PC-9 (cell line): ENCODE measurements at regions of chr5 and their contacts with region 1.

Region 1: GRCh38 chr5:149809931-149810617 is 80.0 kb downstream of the PPARGC1B start:
- DNase-seq: no peak
- H3K4me3 ChIP-seq: no peak overlapping the region
- H3K27ac ChIP-seq: no peak overlapping the region
- H3K4me1 ChIP-seq: peaks cover 11% of the 10 kb centered on the region
- H3K27me3 ChIP-seq: no peaks in the 10 kb centered on the region
- CTCF ChIP-seq: no peak

Region 2: DNA sequence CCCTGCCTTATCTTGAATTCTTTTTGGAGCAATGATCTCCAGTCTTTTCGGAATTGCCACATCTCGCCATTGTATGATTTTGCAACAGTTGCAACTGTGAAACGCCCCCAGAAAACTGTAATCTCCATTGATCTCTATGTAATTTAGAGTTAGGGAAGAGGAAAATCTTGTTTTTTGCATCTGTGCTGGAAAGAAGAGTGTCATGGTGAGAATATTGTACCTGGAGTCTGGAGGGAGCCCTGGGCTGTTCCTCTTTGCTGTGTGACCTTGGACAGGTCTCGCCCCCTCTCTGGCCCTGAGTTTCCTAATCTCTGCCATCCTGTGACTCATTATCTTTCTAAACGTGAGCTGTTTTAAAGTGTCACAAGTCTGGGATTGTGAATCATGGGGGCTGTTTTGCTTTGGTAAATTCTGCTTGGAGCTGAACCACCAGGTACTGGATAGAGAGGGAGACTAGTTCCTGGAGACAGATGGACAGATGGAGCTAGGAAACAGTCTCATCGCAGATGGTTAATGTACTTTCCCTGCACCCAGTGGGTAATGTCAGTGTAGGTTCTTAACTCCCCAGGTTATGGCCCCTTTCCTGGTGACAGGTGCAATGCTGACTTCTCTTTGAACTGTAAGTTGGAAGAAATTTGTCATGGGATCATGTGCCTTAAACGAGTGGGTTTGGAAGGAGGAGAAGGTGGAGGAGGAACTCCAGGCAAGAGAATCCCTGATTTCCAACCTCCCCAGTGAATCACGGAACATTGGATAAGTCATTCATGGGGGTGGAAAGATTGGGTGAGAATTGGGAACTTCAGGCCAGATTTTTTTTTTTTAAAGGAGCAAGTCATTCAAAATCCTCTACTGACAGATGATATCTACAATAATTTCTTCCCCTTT is 60.4 kb before region 1 on chr5:
- CTCF ChIA-PET with region 1: no interaction called
- POLR2A ChIA-PET with region 1: no interaction called
- intact Hi-C with region 1: loop called (anchors 5 kb)
- DNase-seq: peak in 1 of 2 experiments; percentile 48
- H3K4me3 ChIP-seq: no peak overlapping the region
- H3K27ac ChIP-seq: peak overlapping the region; percentile 24
- H3K4me1 ChIP-seq: peaks cover 59% of the 10 kb centered on the region
- H3K27me3 ChIP-seq: no peaks in the 10 kb centered on the region
- CTCF ChIP-seq: no peak

Region 3: DNA sequence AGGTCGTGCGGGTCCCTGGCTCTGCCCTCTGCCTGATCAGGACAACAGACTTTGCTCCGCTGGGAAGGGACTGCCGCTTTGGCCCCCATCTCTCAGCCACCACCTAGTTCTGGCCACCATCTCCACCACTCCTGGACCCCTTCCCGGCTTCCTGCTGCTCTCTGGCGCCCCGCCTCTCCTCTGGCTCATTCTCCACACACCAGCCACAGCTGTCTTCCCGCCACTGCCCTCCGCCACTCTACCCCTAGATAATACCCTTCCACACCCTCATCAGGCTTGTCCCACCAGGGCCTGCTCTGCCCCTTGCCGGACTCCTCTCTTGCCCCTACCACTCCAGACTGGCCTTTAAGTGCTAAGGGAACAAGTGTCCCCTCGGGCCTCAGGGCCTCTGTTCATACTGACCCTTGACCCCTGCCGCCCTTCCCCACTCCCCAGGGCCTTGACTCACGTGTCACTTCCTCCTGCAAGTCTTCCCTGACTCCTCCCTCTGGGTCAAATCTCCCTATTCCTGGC is 353.5 kb after region 1 on chr5:
- CTCF ChIA-PET with region 1: no interaction called
- POLR2A ChIA-PET with region 1: no interaction called
- intact Hi-C with region 1: no loop called
- DNase-seq: no peak
- H3K4me3 ChIP-seq: no peak overlapping the region
- H3K27ac ChIP-seq: no peak overlapping the region
- H3K4me1 ChIP-seq: no peaks in the 10 kb centered on the region; the same call in 1 of the 2 replicates
- H3K27me3 ChIP-seq: no peaks in the 10 kb centered on the region
- CTCF ChIP-seq: no peak